ENCODE measurements at regions of chr1 and their contacts with region 1.

Region 1: DNA sequence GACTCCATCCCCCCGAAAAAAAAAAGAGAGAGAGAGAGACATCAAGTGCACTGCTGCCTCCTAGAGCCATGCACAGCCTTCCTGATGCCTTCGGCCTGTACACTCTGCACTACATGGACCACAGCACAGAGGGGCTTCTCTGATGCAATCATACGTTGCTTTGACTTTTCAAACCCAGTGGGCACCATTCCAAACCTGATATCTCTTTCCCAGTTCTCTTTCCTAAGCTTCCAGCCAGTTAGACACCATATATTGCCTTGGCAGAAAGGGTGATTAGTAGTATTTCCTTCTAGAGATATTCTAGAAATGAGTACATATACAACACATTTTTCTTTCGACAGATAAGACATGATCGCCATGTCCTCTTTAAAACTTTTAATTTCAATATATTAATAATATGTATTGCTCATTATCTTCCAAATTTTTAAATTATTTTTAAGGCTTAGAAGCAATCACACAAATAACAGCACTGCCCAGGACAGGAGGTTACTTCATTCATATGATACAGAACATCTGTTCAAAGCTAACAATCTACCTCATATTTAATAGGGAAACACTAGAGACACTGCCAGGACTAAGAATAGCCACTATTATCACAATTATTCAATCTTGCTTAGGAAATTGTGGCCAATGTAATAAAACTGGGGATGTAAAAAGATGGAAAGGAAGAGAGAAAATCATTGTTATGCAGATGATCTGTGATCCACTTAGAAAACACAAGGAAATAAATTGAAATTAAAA is 9.9 kb downstream of the CLCA1 start:
- DNase-seq: no peak
- ATAC-seq: no peak
- H3K4me3 ChIP-seq: no peak overlapping the region
- H3K27ac ChIP-seq: no peak overlapping the region
- H3K4me1 ChIP-seq: no peaks in the 10 kb centered on the region
- H3K27me3 ChIP-seq: peaks cover 6% of the 10 kb centered on the region
- CTCF ChIP-seq: no peak

Region 2: DNA sequence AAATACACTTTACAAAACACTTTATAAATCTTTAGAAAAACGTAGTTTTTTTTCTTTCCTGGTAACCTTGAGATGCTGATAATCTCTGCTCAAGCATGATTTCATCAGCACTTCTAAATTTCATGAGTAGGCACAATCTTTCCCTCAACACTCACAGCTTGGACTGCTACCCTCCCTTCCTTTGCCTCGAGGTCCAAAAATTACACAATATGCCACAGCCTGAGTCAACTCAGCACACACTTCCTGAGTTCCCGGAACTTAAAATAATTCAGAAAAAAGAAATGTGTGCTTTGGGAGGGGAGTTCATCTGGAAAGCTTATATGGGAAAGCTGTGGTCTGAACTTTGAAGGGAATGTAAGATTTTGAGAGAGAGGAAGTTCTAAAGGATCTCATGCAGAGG is 48.8 kb before region 1 on chr1:
- CTCF ChIA-PET with region 1: no interaction called
- POLR2A ChIA-PET with region 1: no interaction called
- in situ Hi-C with region 1: loop called (anchors 5 kb)
- intact Hi-C with region 1: no loop called
- DNase-seq: peak; percentile 22
- ATAC-seq: peak; percentile 62; the same call in 1 of the 2 replicates
- H3K4me3 ChIP-seq: no peak overlapping the region
- H3K27ac ChIP-seq: no peak overlapping the region
- H3K4me1 ChIP-seq: no peaks in the 10 kb centered on the region
- H3K27me3 ChIP-seq: peaks cover 71% of the 10 kb centered on the region
- CTCF ChIP-seq: no peak

Measured in Panc1 (cell line).